Uterus (tissue), 4 donors: ENCODE measurements at regions of chr6 and their contacts with region 1.

Region 1: DNA sequence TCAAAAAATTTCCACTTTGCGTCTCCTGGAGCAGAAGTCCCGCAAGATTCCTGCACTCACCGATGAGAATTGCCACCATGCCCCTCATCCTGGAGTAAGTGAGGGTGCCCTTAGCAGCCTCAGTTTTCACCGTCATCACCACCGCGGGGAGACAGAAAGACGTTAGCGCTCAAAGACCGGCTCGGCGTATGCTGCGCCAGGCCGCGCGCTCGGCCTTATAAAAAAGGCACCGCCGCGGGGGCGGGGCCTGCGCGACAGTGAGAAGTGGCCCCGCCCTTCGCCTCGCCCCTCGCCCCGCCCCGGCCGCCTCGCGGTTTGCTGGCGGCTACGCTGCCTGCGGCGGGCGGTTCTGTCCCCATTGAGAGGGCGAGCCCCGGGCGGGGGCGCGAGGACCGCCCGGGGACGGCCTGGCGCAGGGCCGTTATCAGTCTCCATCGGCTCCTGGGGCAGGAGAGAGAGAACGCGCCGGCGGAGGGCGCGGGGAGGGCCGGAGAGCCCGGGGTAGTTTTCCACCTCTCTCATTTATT is 122.3 kb upstream of the SLC2A12 start:
- DNase-seq: peak; percentile 89 to 90
- H3K4me3 ChIP-seq: peak overlapping the region; percentile 48 to 84
- H3K27ac ChIP-seq: peak overlapping the region; percentile 92
- H3K4me1 ChIP-seq: peaks cover 0 to 8% of the 10 kb centered on the region in 2 donors
- H3K27me3 ChIP-seq: no peaks in the 10 kb centered on the region
- CTCF ChIP-seq: peak in 1 of 4 experiments; percentile 12
- POLR2A ChIP-seq: peak; percentile 87 to 96

Region 2: DNA sequence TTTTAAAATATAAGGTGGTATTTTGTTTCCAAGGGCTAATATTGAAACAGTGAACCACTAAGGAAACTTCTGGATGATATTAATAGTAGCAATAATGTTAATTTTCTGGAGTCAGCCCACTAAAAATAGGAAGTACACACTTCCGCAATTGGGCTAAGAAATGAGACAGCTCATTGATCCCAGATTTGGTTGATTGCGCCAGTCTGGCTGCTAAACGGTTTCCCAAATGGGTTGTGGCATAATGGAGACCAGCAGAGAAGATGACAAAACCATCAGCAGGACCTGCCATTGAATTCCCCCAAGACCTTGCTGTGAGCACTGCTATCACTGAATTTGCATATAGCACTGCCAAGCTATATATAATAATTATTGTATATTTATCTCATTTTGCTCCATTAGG is 214.4 kb after region 1 on chr6:
- intact Hi-C with region 1: no loop called
- DNase-seq: no peak
- H3K4me3 ChIP-seq: no peak overlapping the region
- H3K27ac ChIP-seq: no peak overlapping the region
- H3K4me1 ChIP-seq: no peaks in the 10 kb centered on the region
- H3K27me3 ChIP-seq: no peaks in the 10 kb centered on the region
- CTCF ChIP-seq: no peak
- POLR2A ChIP-seq: no peak

Region 3: DNA sequence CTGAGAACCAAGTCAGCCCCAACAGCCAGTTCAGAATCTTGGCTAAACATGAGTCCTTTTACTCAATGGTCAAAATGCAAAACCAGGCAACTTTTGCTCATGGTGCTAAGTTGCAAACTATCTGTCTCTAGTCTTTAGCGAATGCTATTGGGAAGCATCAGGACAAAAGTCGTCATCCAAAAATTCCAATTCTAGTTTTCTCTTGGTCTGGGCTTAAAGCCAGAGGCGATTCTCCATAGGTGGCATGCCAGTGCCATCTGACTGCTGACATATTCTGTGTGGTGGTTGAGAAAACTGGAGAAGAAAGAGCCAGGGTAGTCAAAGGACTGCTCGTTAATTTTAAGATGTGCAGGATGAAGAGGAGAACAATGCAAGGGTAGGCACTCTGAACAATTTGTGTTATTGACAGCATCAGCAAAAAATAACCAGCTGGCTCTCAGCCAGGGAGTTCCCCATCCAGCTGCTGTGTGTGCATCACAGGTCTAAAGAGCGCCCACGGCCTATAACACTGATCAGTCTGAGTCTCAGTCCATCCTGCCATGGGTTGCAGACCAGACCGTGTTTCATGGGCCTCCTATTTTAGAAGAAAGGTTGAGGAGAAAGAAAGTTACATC is 461.6 kb after region 1 on chr6:
- intact Hi-C with region 1: loop called (anchors 10 kb)
- DNase-seq: no peak
- H3K4me3 ChIP-seq: no peak overlapping the region
- H3K27ac ChIP-seq: no peak overlapping the region
- H3K4me1 ChIP-seq: no peaks in the 10 kb centered on the region
- H3K27me3 ChIP-seq: no peaks in the 10 kb centered on the region
- CTCF ChIP-seq: no peak
- POLR2A ChIP-seq: no peak

Region 4: DNA sequence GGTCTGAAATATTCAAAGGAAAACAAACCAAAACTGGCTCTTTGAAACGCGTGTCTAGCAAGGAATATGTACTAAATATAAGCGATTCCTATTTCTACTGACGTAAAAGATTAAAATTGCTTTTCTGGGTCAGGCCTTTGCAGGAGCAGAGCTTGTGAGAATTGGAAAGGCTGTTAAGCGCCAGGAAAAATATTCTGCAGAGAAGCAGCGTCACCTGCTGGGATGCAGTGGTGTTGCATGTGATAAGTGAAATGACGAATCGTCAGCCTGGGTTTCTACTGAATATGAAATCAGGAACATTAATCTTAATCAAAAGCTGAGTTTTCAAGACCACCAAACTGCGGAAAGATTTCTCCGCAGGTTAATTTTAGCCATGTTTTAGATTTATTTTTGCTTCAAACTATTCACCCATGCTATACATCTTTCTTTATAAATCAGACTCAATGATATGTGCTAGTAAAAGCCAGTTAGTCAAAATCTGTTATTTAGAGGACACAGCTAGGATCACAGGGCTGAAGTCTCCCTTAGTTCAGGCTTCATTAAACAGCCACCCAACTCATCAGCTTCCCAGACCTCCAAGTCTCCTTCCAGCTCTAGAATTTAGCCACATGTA is 707.8 kb after region 1 on chr6:
- intact Hi-C with region 1: loop called (anchors 10 kb)
- DNase-seq: peak; percentile 68 to 69
- H3K4me3 ChIP-seq: no peak overlapping the region
- H3K27ac ChIP-seq: peak overlapping the region in 1 of 2 donors; percentile 18
- H3K4me1 ChIP-seq: no peaks in the 10 kb centered on the region
- H3K27me3 ChIP-seq: no peaks in the 10 kb centered on the region
- CTCF ChIP-seq: peak; percentile 78 to 95 (median 86)
- POLR2A ChIP-seq: no peak

Region 5: DNA sequence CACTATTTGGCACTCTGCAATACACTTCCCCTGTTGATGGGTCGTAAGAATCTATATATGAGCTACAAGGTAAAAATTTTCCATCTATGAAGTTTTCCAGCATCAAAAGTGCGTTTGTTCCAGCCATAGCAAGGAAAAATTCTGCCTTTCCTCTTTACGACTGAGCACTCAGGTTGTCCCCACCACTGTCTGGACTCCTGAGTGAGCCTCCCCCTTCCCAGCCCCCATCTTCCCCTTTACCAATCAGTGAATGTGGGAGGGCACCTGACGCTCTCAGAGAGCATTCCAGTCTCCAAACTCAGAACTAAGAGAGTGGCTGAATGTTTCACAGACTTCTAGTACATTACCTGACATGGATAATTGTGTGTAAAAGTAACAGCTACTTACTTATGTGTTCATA is 775.2 kb after region 1 on chr6 and contains the start of gene ALDH8A1:
- intact Hi-C with region 1: loop called (anchors 10 kb)
- DNase-seq: no peak
- H3K4me3 ChIP-seq: no peak within 1 kb of the TSS
- H3K27ac ChIP-seq: no peak within 1 kb of the TSS
- H3K4me1 ChIP-seq: no peaks in the 10 kb centered on the region
- H3K27me3 ChIP-seq: no peaks in the 10 kb centered on the region
- CTCF ChIP-seq: no peak
- POLR2A ChIP-seq: no peak
- total RNA-seq, gene ALDH8A1: 0.55 to 1.4 TPM in 2 of 4 donors, not detected in the others